ENCODE measurements at regions of chr1 and their contacts with region 1.

Region 1: GRCh38 chr1:182198049-182198501 is 136.6 kb upstream of the ZNF648 start:
- DNase-seq: no peak
- H3K4me3 ChIP-seq: no peak overlapping the region
- H3K27ac ChIP-seq: peak overlapping the region; percentile 80 to 96 (median 88)
- H3K4me1 ChIP-seq: peaks cover 61 to 66% of the 10 kb centered on the region in 2 donors
- H3K27me3 ChIP-seq: no peaks in the 10 kb centered on the region
- CTCF ChIP-seq: peak in 2 of 6 experiments; percentile 23 to 31
- POLR2A ChIP-seq: no peak

Region 2: GRCh38 chr1:181726320-181727007 is 471.6 kb before region 1 on chr1:
- intact Hi-C with region 1: no loop called
- DNase-seq: no peak
- H3K4me3 ChIP-seq: no peak overlapping the region
- H3K27ac ChIP-seq: no peak overlapping the region
- H3K4me1 ChIP-seq: no peaks in the 10 kb centered on the region
- H3K27me3 ChIP-seq: no peaks in the 10 kb centered on the region
- CTCF ChIP-seq: no peak
- POLR2A ChIP-seq: no peak

Region 3: DNA sequence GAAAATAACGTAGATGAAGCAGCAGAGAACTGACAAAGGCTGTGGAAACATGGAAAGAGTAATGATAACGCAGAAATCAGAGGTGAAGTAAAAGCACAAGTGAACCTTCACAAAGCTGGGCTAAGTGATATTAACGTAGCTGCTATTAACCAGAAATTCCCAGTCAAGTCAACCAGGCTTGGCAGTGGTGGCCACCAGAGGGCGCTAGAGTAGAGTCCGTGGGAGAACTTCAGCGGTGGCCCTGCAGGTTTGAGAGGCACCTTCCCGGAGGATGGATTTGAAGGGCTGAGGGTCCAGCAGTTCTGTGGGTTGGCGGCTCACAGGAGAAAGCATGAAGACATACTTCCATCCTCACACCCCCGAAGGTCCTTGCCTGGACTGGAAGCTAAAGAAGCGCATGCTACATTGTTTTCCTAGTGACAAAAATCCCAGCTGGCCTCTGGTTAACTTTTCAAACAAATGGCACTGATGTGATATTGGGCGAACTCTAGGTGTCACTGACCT is 54.9 kb before region 1 on chr1:
- intact Hi-C with region 1: no loop called
- DNase-seq: peak; percentile 93 to 98
- H3K4me3 ChIP-seq: no peak overlapping the region
- H3K27ac ChIP-seq: peak overlapping the region; percentile 94 to 100 (median 95)
- H3K4me1 ChIP-seq: peaks cover 26 to 54% of the 10 kb centered on the region in 2 donors
- H3K27me3 ChIP-seq: no peaks in the 10 kb centered on the region
- CTCF ChIP-seq: peak; percentile 90 to 98 (median 95)
- POLR2A ChIP-seq: no peak

Region 4: GRCh38 chr1:182391362-182392044 is 193.4 kb after region 1 on chr1 and contains the start of gene GLUL:
- intact Hi-C with region 1: loop called (anchors 10 kb)
- DNase-seq: peak; percentile 98
- H3K4me3 ChIP-seq: peak within 1 kb of the TSS; percentile 49 to 81 (median 80)
- H3K27ac ChIP-seq: peak within 1 kb of the TSS; percentile 99 to 100 (median 100)
- H3K4me1 ChIP-seq: peaks cover 29 to 30% of the 10 kb centered on the region in 2 donors
- H3K27me3 ChIP-seq: no peaks in the 10 kb centered on the region
- CTCF ChIP-seq: peak in 1 of 6 experiments; percentile 7
- POLR2A ChIP-seq: peak; percentile 96 to 100
- total RNA-seq, gene GLUL: 1,653 to 2,736 (median 2,263) TPM

Measured in thyroid gland (tissue), 4 donors.